T-cell (primary cell): ENCODE measurements at regions of chr16 and their contacts with region 1.

Region 1: GRCh38 chr16:66552286-66553177 is at the start of gene CKLF:
- DNase-seq: peak; percentile 78 to 96 (median 88)
- ATAC-seq: peak; percentile 70 to 78 (median 73)
- H3K4me3 ChIP-seq: peak within 1 kb of the TSS; percentile 73 to 81
- H3K4me3 Mint-ChIP-seq: peak within 1 kb of the TSS; percentile 91 to 96 (median 94)
- H3K27ac ChIP-seq: peak within 1 kb of the TSS; percentile 83
- H3K27ac Mint-ChIP-seq: peak within 1 kb of the TSS; percentile 94
- H3K4me1 ChIP-seq: peaks cover 30 to 69% of the 10 kb centered on the region in 2 experiments
- H3K4me1 Mint-ChIP-seq: peaks cover 80 to 81% (median 80%) of the 10 kb centered on the region in 3 donors
- H3K27me3 ChIP-seq: no peaks in the 10 kb centered on the region
- H3K27me3 Mint-ChIP-seq: no peaks in the 10 kb centered on the region
- total RNA-seq, gene CKLF: 25.3 to 67.8 (median 58.3) TPM

Region 2: DNA sequence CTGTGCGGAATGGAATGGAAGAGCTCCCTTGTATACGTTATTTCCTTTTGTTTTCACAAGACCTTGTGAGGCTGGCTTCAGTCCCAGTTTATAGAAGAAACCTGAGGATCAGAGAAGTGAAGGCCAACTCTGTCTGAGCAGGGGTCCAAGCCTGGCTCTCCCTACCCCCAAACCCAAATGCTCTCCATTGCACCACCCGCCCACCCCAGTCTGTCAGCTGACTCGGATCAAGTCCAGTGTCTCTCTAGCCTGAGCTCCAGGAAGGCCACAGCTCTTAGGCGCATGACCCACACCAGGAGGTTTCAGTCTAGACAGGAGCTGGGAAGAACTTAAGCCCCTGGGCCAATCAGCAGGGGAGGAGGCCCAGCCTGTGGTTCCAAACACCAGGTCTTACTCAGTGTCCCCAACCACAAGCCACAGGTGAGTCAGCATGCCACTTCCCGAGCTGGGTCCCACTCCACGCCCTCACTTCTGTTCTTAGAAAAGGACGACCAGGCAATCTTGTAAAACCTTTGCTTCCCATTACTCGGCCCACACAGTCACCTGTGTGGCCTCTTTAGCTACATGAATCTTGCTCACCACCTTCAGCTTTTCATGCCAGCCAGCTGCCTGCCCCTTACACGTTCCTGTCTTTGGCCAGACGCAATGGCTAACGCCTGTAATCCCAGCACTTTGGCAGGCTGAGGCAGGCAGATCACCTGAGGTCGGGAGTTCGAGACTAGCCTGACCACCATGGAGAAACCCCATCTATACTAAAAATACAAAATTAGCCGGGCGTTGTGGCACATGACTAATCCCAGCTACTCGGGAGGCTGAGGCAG is 30.4 kb before region 1 on chr16:
- CTCF ChIA-PET with region 1: interaction called, 3 to 17 read pairs
- POLR2A ChIA-PET with region 1: no interaction called
- DNase-seq: peak; percentile 21 to 86 (median 62)
- ATAC-seq: peak; percentile 72 to 85 (median 79)
- H3K4me3 ChIP-seq: peak overlapping the region; percentile 18 to 52
- H3K4me3 Mint-ChIP-seq: peak overlapping the region; percentile 62 to 69 (median 69)
- H3K27ac ChIP-seq: peak overlapping the region; percentile 68
- H3K27ac Mint-ChIP-seq: peak overlapping the region; percentile 96 to 99
- H3K4me1 ChIP-seq: peaks cover 57 to 85% of the 10 kb centered on the region in 2 experiments
- H3K4me1 Mint-ChIP-seq: peaks cover 84 to 88% (median 84%) of the 10 kb centered on the region in 3 donors
- H3K27me3 ChIP-seq: no peaks in the 10 kb centered on the region
- H3K27me3 Mint-ChIP-seq: no peaks in the 10 kb centered on the region

Region 3: GRCh38 chr16:66608241-66609138 is 56.0 kb after region 1 on chr16:
- CTCF ChIA-PET with region 1: interaction called in 1 of 2 experiments, 11 read pairs
- POLR2A ChIA-PET with region 1: no interaction called
- DNase-seq: peak; percentile 53 to 88 (median 73)
- ATAC-seq: peak; percentile 21 to 41 (median 31)
- H3K4me3 ChIP-seq: no peak overlapping the region
- H3K4me3 Mint-ChIP-seq: peak overlapping the region in 2 of 3 donors; percentile 17 to 38
- H3K27ac ChIP-seq: peak overlapping the region; percentile 44
- H3K27ac Mint-ChIP-seq: peak overlapping the region; percentile 83 to 93
- H3K4me1 ChIP-seq: peaks cover 9 to 48% of the 10 kb centered on the region in 2 experiments
- H3K4me1 Mint-ChIP-seq: peaks cover 30 to 38% (median 35%) of the 10 kb centered on the region in 3 donors
- H3K27me3 ChIP-seq: no peaks in the 10 kb centered on the region
- H3K27me3 Mint-ChIP-seq: no peaks in the 10 kb centered on the region

Region 4: DNA sequence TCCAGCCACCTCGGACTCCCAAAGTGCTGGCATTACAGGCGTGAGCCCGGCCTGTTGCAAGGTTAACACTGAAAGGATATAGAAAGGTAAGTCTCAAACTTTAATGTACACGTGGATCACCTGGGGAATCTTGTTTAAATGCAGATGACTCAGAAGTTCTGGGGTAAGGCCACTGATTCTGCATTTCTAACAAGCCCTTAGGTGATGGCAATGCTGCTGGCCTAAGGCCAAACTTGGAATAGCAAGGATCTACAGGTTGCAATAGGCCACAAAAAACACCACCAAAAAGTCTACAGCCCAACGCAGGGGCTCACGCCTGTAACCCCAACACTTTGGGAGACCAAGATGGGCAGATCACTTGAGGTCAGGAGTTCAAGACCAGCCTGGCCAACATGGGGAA is 139.8 kb after region 1 on chr16:
- CTCF ChIA-PET with region 1: no interaction called
- POLR2A ChIA-PET with region 1: no interaction called
- DNase-seq: no peak
- ATAC-seq: no peak
- H3K4me3 ChIP-seq: no peak overlapping the region
- H3K4me3 Mint-ChIP-seq: no peak overlapping the region
- H3K27ac ChIP-seq: no peak overlapping the region
- H3K27ac Mint-ChIP-seq: no peak overlapping the region
- H3K4me1 ChIP-seq: peaks cover 11 to 17% of the 10 kb centered on the region in 2 experiments
- H3K4me1 Mint-ChIP-seq: peaks cover 11% of the 10 kb centered on the region in 3 donors
- H3K27me3 ChIP-seq: peaks cover 0 to 21% of the 10 kb centered on the region in 2 experiments
- H3K27me3 Mint-ChIP-seq: peaks cover 4 to 10% of the 10 kb centered on the region in 2 donors